Naive thymus-derived CD4-positive, alpha-beta T cell (primary cell): ENCODE measurements at regions of chr5 and their contacts with region 1.

Region 1: GRCh38 chr5:41903892-41904799 is at the start of gene RIMOC1:
- DNase-seq: peak; percentile 94 to 98 (median 97)
- ATAC-seq: peak; percentile 94
- H3K4me3 ChIP-seq: peak within 1 kb of the TSS; percentile 90
- H3K4me3 Mint-ChIP-seq: peak within 1 kb of the TSS; percentile 84 to 99 (median 98)
- H3K27ac ChIP-seq: peak within 1 kb of the TSS; percentile 85
- H3K27ac Mint-ChIP-seq: peak within 1 kb of the TSS; percentile 97 to 100 (median 99)
- H3K4me1 ChIP-seq: peaks cover 16 to 18% of the 10 kb centered on the region in 2 donors
- H3K4me1 Mint-ChIP-seq: peaks cover 21 to 54% (median 46%) of the 10 kb centered on the region in 7 donors
- H3K27me3 ChIP-seq: no peaks in the 10 kb centered on the region
- H3K27me3 Mint-ChIP-seq: peaks cover 0 to 11% (median 0%) of the 10 kb centered on the region in 5 donors
- total RNA-seq, gene RIMOC1: 13.8 to 40.6 (median 27.5) TPM

Region 2: DNA sequence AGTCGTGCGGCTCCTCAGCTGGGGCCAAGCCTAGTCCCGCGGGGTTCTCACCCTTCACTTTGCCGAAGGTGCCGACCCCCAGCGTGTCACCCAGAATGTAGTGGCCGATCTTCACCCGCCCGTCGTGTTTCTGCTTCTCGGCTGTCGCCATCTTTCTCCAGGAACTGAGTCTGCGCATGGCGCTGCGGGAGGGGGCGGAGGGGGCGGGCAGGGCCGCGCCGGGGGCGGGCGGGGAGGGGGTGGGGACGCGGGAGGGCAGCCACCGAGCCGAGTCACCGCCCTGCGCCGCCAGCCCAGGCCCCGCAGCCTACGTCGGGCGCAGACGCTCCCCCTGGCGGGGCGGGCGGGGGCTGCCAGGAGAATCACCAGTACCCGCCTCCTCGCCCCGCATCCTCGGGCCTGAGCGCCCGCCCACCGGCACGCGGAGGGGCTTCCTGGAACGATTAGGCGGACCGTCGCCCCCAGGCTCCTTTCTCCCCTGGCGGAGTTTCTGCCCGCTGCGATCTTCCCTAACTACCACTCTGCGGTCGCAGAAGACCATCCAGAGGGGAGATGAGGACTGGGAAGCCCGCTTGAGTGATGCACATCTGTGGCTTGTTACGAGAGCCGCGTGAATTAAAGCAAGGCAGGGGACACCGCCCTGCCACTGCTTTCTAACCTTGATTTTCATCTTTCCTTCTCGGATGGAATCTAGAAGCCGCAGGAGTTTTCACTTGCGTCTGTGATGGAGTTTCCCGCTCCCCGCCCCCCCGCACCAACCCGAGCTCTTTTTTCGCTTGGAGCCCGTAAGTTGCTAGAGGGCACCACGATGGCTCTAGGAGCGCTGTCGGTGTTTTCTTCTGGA is 1105.9 kb before region 1 on chr5 and contains the start of gene PRKAA1:
- CTCF ChIA-PET with region 1: no interaction called
- POLR2A ChIA-PET with region 1: no interaction called
- intact Hi-C with region 1: loop called (anchors 1 kb)
- DNase-seq: peak; percentile 86 to 92 (median 91)
- ATAC-seq: peak; percentile 98
- H3K4me3 ChIP-seq: peak within 1 kb of the TSS; percentile 98
- H3K4me3 Mint-ChIP-seq: peak within 1 kb of the TSS; percentile 86 to 96 (median 94)
- H3K27ac ChIP-seq: peak within 1 kb of the TSS; percentile 91
- H3K27ac Mint-ChIP-seq: peak within 1 kb of the TSS; percentile 74 to 96 (median 94)
- H3K4me1 ChIP-seq: peaks cover 12 to 16% of the 10 kb centered on the region in 2 donors
- H3K4me1 Mint-ChIP-seq: peaks cover 28 to 55% (median 44%) of the 10 kb centered on the region in 7 donors
- H3K27me3 ChIP-seq: no peaks in the 10 kb centered on the region
- H3K27me3 Mint-ChIP-seq: peaks cover 0 to 17% (median 0%) of the 10 kb centered on the region in 5 donors
- total RNA-seq, gene PRKAA1: 65.5 to 103 (median 98.1) TPM

Region 3: GRCh38 chr5:41863871-41864486 is 40.2 kb before region 1 on chr5:
- CTCF ChIA-PET with region 1: no interaction called
- POLR2A ChIA-PET with region 1: interaction called, 62 read pairs
- intact Hi-C with region 1: no loop called
- DNase-seq: no peak
- ATAC-seq: peak; percentile 12
- H3K4me3 ChIP-seq: no peak overlapping the region
- H3K4me3 Mint-ChIP-seq: peak overlapping the region in 4 of 10 donors; percentile 0 to 44 (median 2)
- H3K27ac ChIP-seq: no peak overlapping the region
- H3K27ac Mint-ChIP-seq: peak overlapping the region in 8 of 9 donors; percentile 6 to 87 (median 36)
- H3K4me1 ChIP-seq: peaks cover under 1 to 6% of the 10 kb centered on the region in 2 donors
- H3K4me1 Mint-ChIP-seq: peaks cover 31 to 64% (median 57%) of the 10 kb centered on the region in 7 donors
- H3K27me3 ChIP-seq: no peaks in the 10 kb centered on the region
- H3K27me3 Mint-ChIP-seq: no peaks in the 10 kb centered on the region

Region 4: DNA sequence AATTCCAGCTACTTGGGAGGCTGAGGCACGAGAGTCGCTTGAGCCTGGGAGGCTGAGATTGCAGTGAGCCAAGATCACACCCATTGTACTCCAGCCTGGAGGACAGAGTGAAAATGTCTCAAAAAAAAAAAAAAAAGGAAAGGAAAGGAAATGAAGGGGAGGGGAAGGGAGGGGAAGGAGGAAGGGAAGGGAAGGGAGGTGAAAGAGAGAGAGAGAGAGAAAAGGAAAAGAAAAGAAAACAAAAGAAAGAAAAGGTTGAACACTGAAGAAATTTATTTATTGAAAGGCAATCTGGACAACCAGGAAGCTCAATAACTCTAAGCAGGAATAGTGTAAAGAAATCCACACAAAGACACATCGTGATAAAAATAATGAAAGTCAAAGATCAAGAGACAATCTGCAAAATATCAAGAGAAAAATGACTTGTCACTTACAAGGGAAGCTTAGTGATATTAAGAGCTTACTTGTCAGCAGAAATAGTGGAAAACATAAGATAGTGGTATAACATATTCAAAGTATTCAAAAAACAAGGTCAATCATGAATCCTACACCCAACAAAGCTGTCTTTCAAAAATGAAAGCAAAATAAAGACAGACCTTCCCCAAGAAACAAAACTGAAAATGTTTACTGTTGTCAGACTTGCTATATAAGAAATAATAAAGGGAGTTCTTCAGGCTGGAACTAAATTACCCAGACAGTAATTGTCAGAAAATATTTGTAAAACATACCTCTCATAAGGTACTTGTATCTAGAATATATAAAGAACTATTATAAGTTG is 10.9 kb before region 1 on chr5:
- CTCF ChIA-PET with region 1: no interaction called
- POLR2A ChIA-PET with region 1: interaction called, 4 read pairs
- intact Hi-C with region 1: loop called in 1 of 2 experiments (anchors 1 kb)
- DNase-seq: no peak
- ATAC-seq: no peak
- H3K4me3 ChIP-seq: no peak overlapping the region
- H3K4me3 Mint-ChIP-seq: peak overlapping the region in 1 of 10 donors; percentile 65
- H3K27ac ChIP-seq: no peak overlapping the region
- H3K27ac Mint-ChIP-seq: peak overlapping the region in 1 of 9 donors; percentile 75
- H3K4me1 ChIP-seq: no peaks in the 10 kb centered on the region
- H3K4me1 Mint-ChIP-seq: peaks cover 0 to 25% (median 6%) of the 10 kb centered on the region in 7 donors
- H3K27me3 ChIP-seq: no peaks in the 10 kb centered on the region
- H3K27me3 Mint-ChIP-seq: peaks cover 28 to 52% (median 34%) of the 10 kb centered on the region in 5 donors

Region 5: DNA sequence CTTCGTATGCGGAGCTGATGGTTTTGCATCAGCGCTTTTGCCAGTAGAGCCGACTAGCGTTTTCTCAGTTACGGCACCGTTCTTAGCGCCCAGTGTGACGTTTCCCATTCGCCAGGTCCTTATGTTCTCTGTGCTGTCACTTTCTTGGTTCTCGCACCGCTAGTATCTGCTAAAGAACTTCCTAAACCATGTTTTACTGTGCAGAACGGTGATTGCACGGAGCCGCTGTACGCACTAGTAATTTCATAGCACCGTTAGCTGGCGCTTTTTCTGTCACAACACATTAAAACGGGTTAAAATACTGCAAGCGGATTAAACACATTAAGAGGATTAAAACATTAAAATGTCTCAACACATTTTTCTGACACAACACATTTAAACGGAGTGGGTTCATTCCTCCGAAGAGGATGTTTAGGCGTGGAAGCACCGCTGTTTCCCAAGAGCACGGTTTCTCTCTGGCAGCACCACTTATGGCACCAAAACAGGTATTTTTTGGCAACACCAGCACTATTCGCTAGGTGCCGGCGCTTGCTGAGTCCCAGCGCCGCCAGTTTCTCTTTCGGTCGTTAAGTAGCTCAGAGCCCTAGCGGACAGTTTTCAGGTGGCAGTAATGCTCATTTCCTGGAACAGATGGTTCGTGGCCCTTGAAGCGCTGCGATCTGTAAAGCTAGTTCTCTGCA is 1115.6 kb after region 1 on chr5:
- CTCF ChIA-PET with region 1: no interaction called
- POLR2A ChIA-PET with region 1: interaction called, 9 read pairs
- intact Hi-C with region 1: loop called in 1 of 2 experiments (anchors 1 kb)
- DNase-seq: peak; percentile 63 to 94 (median 88)
- ATAC-seq: peak; percentile 77
- H3K4me3 ChIP-seq: peak overlapping the region; percentile 76
- H3K4me3 Mint-ChIP-seq: peak overlapping the region; percentile 92 to 99 (median 98)
- H3K27ac ChIP-seq: peak overlapping the region; percentile 96
- H3K27ac Mint-ChIP-seq: peak overlapping the region; percentile 96 to 100 (median 99)
- H3K4me1 ChIP-seq: peaks cover 34 to 35% of the 10 kb centered on the region in 2 donors
- H3K4me1 Mint-ChIP-seq: peaks cover 20 to 52% (median 46%) of the 10 kb centered on the region in 7 donors
- H3K27me3 ChIP-seq: no peaks in the 10 kb centered on the region
- H3K27me3 Mint-ChIP-seq: no peaks in the 10 kb centered on the region